Dendritic cell treated with granulocyte-macrophage colony-stimulating factor and Interleukin-4, amounts not matched to agents 40 ng/mL and 50 ng/mL, for 4 days (primary cell): ENCODE measurements at regions of chr6 and their contacts with region 1.

Region 1: GRCh38 chr6:167898673-167899311 is 72.1 kb downstream of the AFDN start:
- H3K4me3 Mint-ChIP-seq: no peak overlapping the region
- H3K27ac Mint-ChIP-seq: no peak overlapping the region
- H3K4me1 Mint-ChIP-seq: no peaks in the 10 kb centered on the region
- H3K27me3 Mint-ChIP-seq: no peaks in the 10 kb centered on the region

Region 2: DNA sequence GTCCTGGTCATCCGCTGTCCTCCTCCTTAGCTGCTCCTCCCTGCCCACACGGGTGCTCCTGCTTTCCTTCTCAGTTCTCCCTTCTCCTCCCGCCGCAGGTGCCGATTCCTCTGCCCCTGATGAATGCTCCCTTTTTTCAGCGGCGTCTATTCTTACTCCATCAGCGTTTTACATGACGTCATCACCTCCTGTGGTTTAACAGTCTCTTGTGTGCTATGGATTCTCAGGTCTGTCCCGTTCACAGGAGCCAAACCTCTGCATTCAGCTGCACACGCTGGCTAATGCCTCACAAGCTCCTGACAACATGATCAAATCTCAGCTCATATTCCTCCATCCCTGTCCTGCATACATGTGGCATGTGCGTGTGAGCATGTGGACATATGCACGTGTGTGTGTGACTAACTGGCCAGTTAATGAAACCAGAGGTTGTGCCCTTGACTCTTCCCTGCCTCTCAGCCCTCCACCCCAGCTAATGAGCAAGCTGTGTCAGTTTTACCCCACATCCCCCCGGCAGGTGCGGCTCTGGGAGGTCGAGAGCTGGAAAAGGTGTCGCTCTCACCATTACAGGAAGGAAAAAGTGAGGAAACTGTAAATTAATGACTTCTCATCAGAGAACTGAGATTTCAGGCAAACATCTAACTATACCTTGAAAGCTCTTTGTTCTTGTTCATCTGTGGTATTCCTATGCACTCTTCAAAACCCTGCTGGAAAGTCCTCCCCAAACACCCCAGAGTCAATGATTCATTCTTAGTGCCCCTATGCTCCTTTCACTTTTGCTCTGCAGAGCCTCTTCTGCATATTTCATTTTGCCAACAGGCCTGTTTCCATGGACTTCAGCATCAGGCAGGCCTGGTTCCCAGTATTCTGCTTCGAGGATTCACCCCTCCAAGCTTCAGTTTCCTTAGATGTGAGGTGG is 410.8 kb before region 1 on chr6:
- intact Hi-C with region 1: loop called (anchors 2 kb)
- H3K4me3 Mint-ChIP-seq: no peak overlapping the region
- H3K27ac Mint-ChIP-seq: no peak overlapping the region
- H3K4me1 Mint-ChIP-seq: no peaks in the 10 kb centered on the region
- H3K27me3 Mint-ChIP-seq: peaks cover 4% of the 10 kb centered on the region

Region 3: GRCh38 chr6:167839755-167840154 is 59.0 kb before region 1 on chr6:
- intact Hi-C with region 1: no loop called
- H3K4me3 Mint-ChIP-seq: no peak overlapping the region
- H3K27ac Mint-ChIP-seq: no peak overlapping the region
- H3K4me1 Mint-ChIP-seq: no peaks in the 10 kb centered on the region
- H3K27me3 Mint-ChIP-seq: peaks cover 13% of the 10 kb centered on the region